Activated CD4-positive, alpha-beta T cell treated with anti-CD3 and anti-CD28 coated beads for 36 hours (primary cell): ENCODE measurements at regions of chr6 and their contacts with region 1.

Region 1: DNA sequence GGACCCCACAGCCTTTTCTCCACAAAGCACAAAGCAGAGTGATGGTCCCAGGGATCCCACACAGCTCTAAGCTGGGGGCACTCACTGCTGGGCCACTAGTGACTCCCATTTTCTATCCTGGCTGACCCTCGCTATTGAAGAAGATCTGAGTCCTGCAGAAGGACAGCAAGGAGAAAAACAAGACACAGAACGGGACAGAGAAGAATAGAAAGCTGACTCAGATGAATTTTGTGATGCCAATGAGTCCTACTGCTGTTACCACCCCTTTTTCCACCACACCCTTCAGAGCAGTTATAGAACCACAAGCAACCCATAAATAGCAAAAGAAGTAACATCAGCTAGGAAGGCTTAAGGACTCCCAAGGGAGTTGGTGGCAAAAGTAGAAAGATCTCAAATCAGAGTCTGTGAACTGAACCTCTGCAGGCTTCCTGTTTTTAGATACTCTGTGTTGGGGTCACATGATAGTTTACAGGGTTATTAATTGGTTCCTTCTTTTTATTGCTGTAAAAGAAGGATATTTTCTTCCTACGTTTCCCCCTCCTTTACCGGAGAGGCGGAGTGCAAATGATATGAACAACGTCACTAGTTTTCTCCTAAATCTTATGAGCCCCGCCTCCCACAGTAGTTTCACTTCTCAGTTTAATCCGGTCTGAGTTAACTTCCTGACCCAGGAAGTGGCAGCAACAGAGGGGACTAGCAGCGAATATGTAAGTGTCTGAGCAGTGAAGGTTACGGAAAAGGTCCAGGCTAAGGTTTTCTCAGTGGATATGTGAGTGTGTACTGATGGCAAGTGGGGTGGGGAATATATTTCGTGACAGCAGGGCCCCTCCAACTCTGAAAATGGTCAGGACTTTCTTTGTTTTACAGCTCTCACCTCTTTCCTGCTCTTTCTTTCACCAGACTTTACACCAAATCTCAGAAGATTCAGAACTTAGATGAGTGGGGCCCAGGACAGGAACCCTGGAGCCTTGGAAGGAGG is at the start of gene TRIM38:
- DNase-seq: peak; percentile 82
- ATAC-seq: peak; percentile 80
- H3K4me3 Mint-ChIP-seq: peak within 1 kb of the TSS; percentile 96
- H3K27ac Mint-ChIP-seq: peak within 1 kb of the TSS; percentile 100
- H3K4me1 Mint-ChIP-seq: peaks cover 74% of the 10 kb centered on the region
- H3K27me3 Mint-ChIP-seq: no peaks in the 10 kb centered on the region
- total RNA-seq, gene TRIM38: 24.9 TPM

Region 2: DNA sequence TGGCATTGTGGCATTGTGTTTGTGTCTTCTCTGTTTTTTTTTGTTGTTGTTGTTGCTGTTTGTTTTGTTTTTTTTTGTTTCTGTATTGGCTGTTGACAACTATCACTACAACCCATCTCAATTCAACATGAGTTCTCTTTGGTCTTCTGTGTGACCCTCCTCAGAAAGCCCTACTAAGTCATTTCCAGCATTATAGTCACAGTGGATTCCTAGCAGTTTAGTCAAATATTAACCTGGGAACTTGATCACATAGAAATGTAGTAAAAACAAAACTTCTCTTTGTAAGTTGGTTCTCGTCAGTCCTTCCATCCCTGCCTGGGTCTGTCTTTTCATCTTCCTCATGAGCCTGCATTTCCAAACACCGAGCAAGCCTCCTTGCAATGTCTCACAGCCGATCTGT is 48.7 kb before region 1 on chr6:
- CTCF ChIA-PET with region 1: no interaction called
- POLR2A ChIA-PET with region 1: no interaction called
- intact Hi-C with region 1: loop called (anchors 1 to 5 kb)
- DNase-seq: peak; percentile 44
- ATAC-seq: peak; percentile 67
- H3K4me3 Mint-ChIP-seq: no peak overlapping the region
- H3K27ac Mint-ChIP-seq: peak overlapping the region; percentile 75
- H3K4me1 Mint-ChIP-seq: peaks cover 63% of the 10 kb centered on the region
- H3K27me3 Mint-ChIP-seq: no peaks in the 10 kb centered on the region

Region 3: DNA sequence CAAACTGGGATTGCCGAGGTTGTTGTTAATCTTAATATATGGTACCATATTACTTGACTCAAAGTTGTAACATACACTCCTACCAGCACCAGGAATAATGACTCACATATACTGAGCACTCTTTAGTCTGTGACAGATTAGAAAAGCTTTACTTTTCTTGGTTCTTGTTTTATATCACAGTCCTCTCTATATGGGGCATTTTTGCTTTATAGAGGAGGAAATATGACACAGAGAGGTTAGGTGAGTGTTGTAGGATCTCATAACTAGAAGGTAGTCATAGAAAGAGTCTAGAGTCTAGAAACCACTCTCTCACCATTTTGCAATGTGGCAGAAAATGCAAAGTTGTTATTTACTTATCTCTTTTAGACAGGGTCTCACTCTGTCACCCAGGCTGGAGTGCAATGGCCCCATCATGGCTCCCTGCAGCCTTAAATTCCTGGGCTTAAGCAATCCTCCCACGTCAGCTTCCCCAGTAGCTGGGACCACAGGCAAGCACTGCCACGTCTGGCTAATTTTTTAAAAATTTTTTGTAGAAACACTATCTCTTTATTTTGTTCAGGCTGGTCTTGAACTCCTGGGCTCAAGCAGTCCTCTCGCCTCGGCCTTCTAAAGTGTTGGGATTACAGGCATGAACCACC is 13.6 kb after region 1 on chr6:
- CTCF ChIA-PET with region 1: interaction called, 4 read pairs
- POLR2A ChIA-PET with region 1: interaction called, 4 read pairs
- intact Hi-C with region 1: loop called in 1 of 2 experiments (anchors 1 kb)
- DNase-seq: no peak
- ATAC-seq: peak; percentile 99
- H3K4me3 Mint-ChIP-seq: no peak overlapping the region
- H3K27ac Mint-ChIP-seq: peak overlapping the region; percentile 24
- H3K4me1 Mint-ChIP-seq: peaks cover 49% of the 10 kb centered on the region
- H3K27me3 Mint-ChIP-seq: no peaks in the 10 kb centered on the region

Region 4: GRCh38 chr6:26075063-26075717 is 112.8 kb after region 1 on chr6:
- CTCF ChIA-PET with region 1: no interaction called
- POLR2A ChIA-PET with region 1: no interaction called
- intact Hi-C with region 1: no loop called
- DNase-seq: no peak
- ATAC-seq: no peak
- H3K4me3 Mint-ChIP-seq: no peak overlapping the region
- H3K27ac Mint-ChIP-seq: no peak overlapping the region
- H3K4me1 Mint-ChIP-seq: peaks cover 6% of the 10 kb centered on the region
- H3K27me3 Mint-ChIP-seq: no peaks in the 10 kb centered on the region